ENCODE measurements at regions of chr7 and their contacts with region 1.

Region 1: GRCh38 chr7:66920769-66921395 is at the start of gene TMEM248:
- DNase-seq: peak; percentile 91 to 96 (median 92)
- ATAC-seq: peak; percentile 94 to 98 (median 98)
- H3K4me3 ChIP-seq: peak within 1 kb of the TSS; percentile 90 to 100 (median 96)
- H3K27ac ChIP-seq: peak within 1 kb of the TSS; percentile 17 to 87 (median 77)
- H3K4me1 ChIP-seq: peaks cover 3 to 40% (median 26%) of the 10 kb centered on the region in 12 donors
- H3K27me3 ChIP-seq: no peaks in the 10 kb centered on the region
- CTCF ChIP-seq: no peak
- POLR2A ChIP-seq: peak in 1 of 2 donors; percentile 40
- total RNA-seq, gene TMEM248: 34.6 to 121 (median 55.2) TPM

Region 2: GRCh38 chr7:66859794-66860645 is 60.9 kb before region 1 on chr7:
- intact Hi-C with region 1: loop called in 1 of 10 experiments (anchors 10 kb)
- DNase-seq: peak in 2 of 5 donors; percentile 42 to 48
- ATAC-seq: peak; percentile 70 to 95 (median 88)
- H3K4me3 ChIP-seq: no peak overlapping the region
- H3K27ac ChIP-seq: peak overlapping the region in 11 of 12 donors; percentile 7 to 79 (median 71)
- H3K4me1 ChIP-seq: peaks cover 0 to 14% (median 3%) of the 10 kb centered on the region in 12 donors
- H3K27me3 ChIP-seq: no peaks in the 10 kb centered on the region
- CTCF ChIP-seq: no peak
- POLR2A ChIP-seq: no peak

Region 3: DNA sequence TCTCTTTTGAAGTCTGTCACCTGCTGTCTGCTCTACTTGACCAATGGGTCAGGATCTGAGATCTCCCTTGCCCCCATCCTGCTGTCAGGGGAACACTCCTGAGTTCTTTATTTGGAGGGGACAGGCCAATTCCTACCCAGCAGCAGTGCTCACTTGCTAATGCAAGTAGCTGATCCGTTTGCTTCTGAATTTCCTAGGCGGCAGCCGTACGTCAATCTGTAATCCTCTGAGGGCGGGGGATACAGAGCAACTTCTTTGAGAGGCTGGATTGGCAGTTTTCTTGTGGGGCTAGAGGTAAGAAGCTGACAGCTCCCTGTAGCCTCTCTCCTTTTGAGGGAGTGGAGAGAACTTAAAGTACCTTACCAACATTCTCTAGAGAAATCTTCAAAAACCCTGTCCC is 112.4 kb after region 1 on chr7:
- intact Hi-C with region 1: no loop called
- DNase-seq: no peak
- ATAC-seq: no peak
- H3K4me3 ChIP-seq: no peak overlapping the region
- H3K27ac ChIP-seq: no peak overlapping the region
- H3K4me1 ChIP-seq: peaks cover 0 to 14% (median 2%) of the 10 kb centered on the region in 12 donors
- H3K27me3 ChIP-seq: no peaks in the 10 kb centered on the region
- CTCF ChIP-seq: no peak
- POLR2A ChIP-seq: no peak